ENCODE measurements at regions of chr9 and their contacts with region 1.

Region 1: GRCh38 chr9:130243015-130243734 is 22.4 kb upstream of the HMCN2 start:
- DNase-seq: no peak
- H3K4me3 ChIP-seq: no peak overlapping the region
- H3K27me3 ChIP-seq: no peaks in the 10 kb centered on the region; the same call in 1 of the 2 replicates
- CTCF ChIP-seq: peak; percentile 89

Region 2: GRCh38 chr9:130227833-130228232 is 15.3 kb before region 1 on chr9:
- CTCF ChIA-PET with region 1: interaction called, 13 read pairs
- POLR2A ChIA-PET with region 1: no interaction called
- DNase-seq: no peak
- H3K4me3 ChIP-seq: no peak overlapping the region
- H3K27me3 ChIP-seq: no peaks in the 10 kb centered on the region
- CTCF ChIP-seq: no peak

Region 3: GRCh38 chr9:130254752-130255630 is 11.8 kb after region 1 on chr9:
- CTCF ChIA-PET with region 1: interaction called, 37 read pairs
- POLR2A ChIA-PET with region 1: no interaction called
- DNase-seq: no peak
- H3K4me3 ChIP-seq: no peak overlapping the region
- H3K27me3 ChIP-seq: peaks cover 6% of the 10 kb centered on the region
- CTCF ChIP-seq: no peak

Region 4: GRCh38 chr9:130263601-130264413 is 20.6 kb after region 1 on chr9:
- CTCF ChIA-PET with region 1: interaction called, 12 read pairs
- POLR2A ChIA-PET with region 1: no interaction called
- DNase-seq: no peak
- H3K4me3 ChIP-seq: no peak overlapping the region
- H3K27me3 ChIP-seq: peaks cover 62% of the 10 kb centered on the region
- CTCF ChIP-seq: no peak

Measured in BJ (cell line).